Activated T-helper 1 cell treated with anti-CD3 and anti-CD28 coated beads, Interleukin-12 subunit alpha, Interleukin-12 subunit beta, Interleukin-2, Interleukin-4 antibody, amounts not matched to agents 30 ng/mL and 10 ng/mL and 1 ng/mL, durations not matched to agents 14 hours and 24 hours and 36 hours (primary cell): ENCODE measurements at regions of chr3 and their contacts with region 1.

Region 1: DNA sequence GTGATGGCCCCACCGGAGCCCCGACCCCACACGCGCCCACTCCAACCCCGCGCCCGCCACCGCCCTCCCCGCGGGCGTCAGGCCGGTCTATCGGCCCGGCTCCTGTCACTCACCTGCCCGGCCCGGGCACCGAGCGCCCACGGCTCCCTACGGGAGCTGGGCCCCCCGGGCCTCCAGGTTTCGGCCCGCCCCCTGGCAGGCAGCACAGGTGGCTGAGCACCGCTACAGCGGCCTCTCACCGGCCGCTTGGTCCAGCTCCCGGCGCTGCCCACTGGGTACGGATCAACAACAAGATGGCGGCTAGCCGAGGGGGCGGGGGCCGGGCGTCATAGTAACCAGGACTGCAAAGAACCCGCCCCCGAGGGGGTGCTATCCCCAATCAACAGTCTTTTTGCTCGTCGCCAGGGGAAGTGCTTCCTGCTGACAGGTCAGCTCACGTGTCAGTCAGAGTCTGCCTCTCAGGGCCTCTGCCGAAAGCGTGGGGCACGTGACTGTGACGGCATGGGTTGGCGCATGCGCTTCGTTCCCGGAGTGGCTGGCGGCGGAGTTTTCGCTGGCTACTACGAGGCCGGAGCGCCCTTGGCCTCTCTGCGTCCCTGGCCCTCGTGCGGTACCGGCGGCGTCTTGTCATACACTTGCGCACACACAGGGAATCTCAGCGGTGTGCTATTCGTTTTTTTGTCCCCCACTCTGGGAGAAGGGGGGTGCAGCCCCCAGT is at the start of gene IP6K1:
- DNase-seq: peak; percentile 100
- H3K4me3 Mint-ChIP-seq: peak within 1 kb of the TSS; percentile 92
- H3K27ac Mint-ChIP-seq: peak within 1 kb of the TSS; percentile 94
- H3K4me1 Mint-ChIP-seq: peaks cover 26% of the 10 kb centered on the region
- H3K27me3 Mint-ChIP-seq: peaks cover 8% of the 10 kb centered on the region
- total RNA-seq, gene IP6K1: 49.3 and 52.4 TPM in 2 replicates

Region 2: DNA sequence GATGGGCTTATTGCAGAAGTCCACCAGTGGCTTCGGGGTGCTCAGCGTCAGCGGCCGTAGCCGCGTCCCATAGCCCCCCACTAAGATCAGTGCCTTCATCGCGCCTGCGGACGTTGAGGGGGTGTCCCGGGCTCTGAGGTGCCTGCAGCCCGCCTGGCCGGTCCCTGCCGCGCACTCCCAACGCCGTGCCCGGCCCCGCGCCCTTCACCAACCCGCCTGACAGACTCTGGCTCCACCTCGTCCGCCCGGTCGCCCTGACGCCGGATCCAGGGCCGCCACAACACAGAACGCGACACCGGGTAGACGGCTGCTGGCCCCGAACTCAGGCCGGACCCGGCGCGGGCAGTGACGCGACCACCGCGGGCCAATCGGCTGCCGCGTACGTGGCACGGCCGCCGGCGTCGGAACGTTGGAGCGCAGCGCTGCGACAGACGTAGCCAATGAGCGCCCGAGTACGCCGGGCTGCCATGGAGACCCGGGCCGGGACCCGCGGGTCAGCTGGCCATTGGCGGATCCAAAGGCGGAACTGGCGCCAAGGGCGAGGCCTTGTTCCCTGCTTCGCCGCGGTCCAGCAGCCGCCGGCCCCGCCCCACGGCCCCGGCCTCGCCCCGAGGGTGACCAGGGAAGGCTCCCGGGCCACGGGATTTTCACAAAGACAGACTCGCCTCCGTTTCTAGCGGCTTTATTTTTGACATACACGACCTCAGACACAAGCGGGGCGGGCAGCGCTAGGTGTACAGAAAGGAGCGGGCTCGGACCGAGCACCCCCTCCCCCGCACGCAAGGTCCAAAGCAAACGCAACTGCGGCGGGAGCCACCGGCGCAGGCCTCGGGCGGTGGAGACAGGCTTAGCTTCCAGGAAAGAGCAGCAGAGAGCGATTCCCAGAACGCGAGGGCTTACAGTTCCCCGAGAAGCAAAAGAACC is 62.5 kb before region 1 on chr3 and contains the start of gene GMPPB:
- intact Hi-C with region 1: loop called (anchors 1 kb)
- DNase-seq: peak; percentile 95
- H3K4me3 Mint-ChIP-seq: peak within 1 kb of the TSS; percentile 95
- H3K27ac Mint-ChIP-seq: peak within 1 kb of the TSS; percentile 95
- H3K4me1 Mint-ChIP-seq: peaks cover 34% of the 10 kb centered on the region
- H3K27me3 Mint-ChIP-seq: no peaks in the 10 kb centered on the region
- total RNA-seq, gene GMPPB: 49.1 and 49.2 TPM in 2 replicates

Region 3: GRCh38 chr3:49839193-49839809 is 52.9 kb after region 1 on chr3:
- intact Hi-C with region 1: loop called (anchors 1 kb)
- DNase-seq: peak; percentile 69
- H3K4me3 Mint-ChIP-seq: no peak overlapping the region
- H3K27ac Mint-ChIP-seq: no peak overlapping the region
- H3K4me1 Mint-ChIP-seq: no peaks in the 10 kb centered on the region
- H3K27me3 Mint-ChIP-seq: no peaks in the 10 kb centered on the region

Region 4: GRCh38 chr3:49929331-49930240 is 143.2 kb after region 1 on chr3 and contains the start of gene MON1A:
- intact Hi-C with region 1: loop called (anchors 1 kb)
- DNase-seq: peak; percentile 88
- H3K4me3 Mint-ChIP-seq: peak within 1 kb of the TSS; percentile 90
- H3K27ac Mint-ChIP-seq: peak within 1 kb of the TSS; percentile 81
- H3K4me1 Mint-ChIP-seq: peaks cover 21% of the 10 kb centered on the region
- H3K27me3 Mint-ChIP-seq: no peaks in the 10 kb centered on the region
- total RNA-seq, gene MON1A: 15.5 and 17.3 TPM in 2 replicates

Region 5: GRCh38 chr3:50088725-50089608 is 302.6 kb after region 1 on chr3 and contains the start of gene RBM5:
- intact Hi-C with region 1: loop called (anchors 1 kb)
- DNase-seq: peak; percentile 91
- H3K4me3 Mint-ChIP-seq: peak within 1 kb of the TSS; percentile 97
- H3K27ac Mint-ChIP-seq: peak within 1 kb of the TSS; percentile 95
- H3K4me1 Mint-ChIP-seq: peaks cover 31% of the 10 kb centered on the region
- H3K27me3 Mint-ChIP-seq: no peaks in the 10 kb centered on the region
- total RNA-seq, gene RBM5: 157 and 162 TPM in 2 replicates